HEK293 (cell line): ENCODE measurements at regions of chr18 and their contacts with region 1.

Region 1: GRCh38 chr18:62324917-62325805 is at the start of gene TNFRSF11A:
- H3K4me3 ChIP-seq: peak within 1 kb of the TSS; percentile 54
- H3K27ac ChIP-seq: peak within 1 kb of the TSS; percentile 75; the same call in 1 of the 2 replicates
- H3K4me1 ChIP-seq: peaks cover 52% of the 10 kb centered on the region
- CTCF ChIP-seq: peak; percentile 15; the same call in 1 of the 2 replicates

Region 2: DNA sequence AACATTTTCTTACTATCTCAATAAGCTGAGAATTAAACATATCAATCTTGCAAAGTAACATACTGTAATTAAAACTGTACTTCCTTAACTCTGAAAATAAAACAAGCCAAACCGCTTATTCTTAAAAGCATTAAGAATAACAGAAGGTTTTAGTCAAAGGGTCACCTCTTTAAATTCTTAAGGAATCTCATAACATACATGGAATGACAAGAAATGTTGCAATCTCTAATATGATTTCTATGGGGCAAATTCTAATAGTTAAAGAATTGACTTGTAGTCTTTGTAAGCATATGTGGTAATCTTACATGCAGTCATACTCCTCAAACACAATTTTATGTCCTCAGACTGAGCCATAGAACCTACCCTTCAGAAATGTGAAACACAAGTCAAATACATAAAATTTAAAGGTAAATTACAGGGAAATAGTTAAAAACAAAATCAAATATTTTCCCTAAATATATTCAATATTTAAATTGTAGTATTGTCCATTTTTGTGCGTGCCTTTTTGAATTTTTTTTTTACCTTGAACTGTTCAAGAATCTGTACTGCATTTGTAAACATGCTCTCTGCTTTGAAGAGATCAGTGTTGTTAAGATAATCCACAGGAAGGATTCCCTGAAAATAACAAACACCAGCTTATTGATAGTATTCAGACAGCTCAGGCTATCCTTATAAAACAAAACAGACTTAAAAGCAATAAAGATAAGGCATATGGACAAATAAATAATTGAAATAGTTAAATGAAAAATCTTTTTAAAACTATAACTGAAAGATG is 186.5 kb before region 1 on chr18:
- CTCF ChIA-PET with region 1: no interaction called
- POLR2A ChIA-PET with region 1: no interaction called
- H3K4me3 ChIP-seq: no peak overlapping the region
- H3K27ac ChIP-seq: no peak overlapping the region
- H3K4me1 ChIP-seq: no peaks in the 10 kb centered on the region
- CTCF ChIP-seq: no peak

Region 3: DNA sequence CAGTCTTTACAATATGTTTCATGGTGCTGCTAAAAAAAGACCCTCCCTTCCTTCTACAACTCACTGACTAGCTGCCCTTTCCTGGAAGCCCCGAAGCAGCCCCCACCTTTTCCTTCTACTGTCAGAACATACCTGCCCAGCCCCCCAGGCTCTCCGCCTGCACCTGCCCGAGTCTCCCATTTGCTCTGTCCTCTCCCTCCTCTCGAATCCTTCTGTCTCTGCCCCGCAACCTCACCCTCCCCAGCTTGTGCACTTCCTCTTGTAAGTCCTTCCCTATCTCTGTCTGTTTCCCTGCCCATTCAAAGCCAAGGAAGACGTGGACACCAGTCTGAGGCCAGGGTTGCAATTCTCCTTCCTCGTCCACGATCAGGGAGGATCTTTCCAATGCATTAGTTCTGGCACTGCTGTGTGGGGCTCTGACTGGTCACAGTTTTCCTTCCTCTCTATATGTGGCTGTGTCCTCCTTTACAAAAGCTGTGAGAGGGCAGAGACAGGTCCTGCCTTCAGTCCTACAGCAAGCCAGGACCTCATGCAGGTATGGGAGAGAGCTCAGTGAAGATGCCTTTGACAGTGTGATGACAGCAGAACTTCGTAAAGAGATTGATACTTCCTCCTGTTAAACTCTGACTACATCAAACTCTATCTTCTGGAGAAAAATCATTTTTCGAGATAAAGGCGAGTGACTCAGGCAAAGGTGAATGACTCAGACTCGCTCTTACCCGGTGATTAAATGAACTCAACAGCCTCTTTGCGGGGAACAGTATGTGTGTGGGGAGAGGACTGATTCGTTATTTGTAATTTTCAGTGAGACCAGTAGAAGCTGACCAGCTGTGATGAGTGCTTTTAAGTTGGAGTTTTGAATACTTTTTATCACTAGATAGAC is 14.2 kb after region 1 on chr18:
- CTCF ChIA-PET with region 1: interaction called, 10 read pairs
- POLR2A ChIA-PET with region 1: interaction called, 6 read pairs
- H3K4me3 ChIP-seq: no peak overlapping the region
- H3K27ac ChIP-seq: no peak overlapping the region
- H3K4me1 ChIP-seq: peaks cover 34% of the 10 kb centered on the region
- CTCF ChIP-seq: no peak